Common myeloid progenitor, CD34-positive (primary cell): ENCODE measurements at regions of chr1 and their contacts with region 1.

Region 1: GRCh38 chr1:32400876-32401631 is 6.8 kb upstream of the BSDC1 start:
- DNase-seq: peak; percentile 39 to 54 (median 40)
- H3K4me3 ChIP-seq: peak overlapping the region in 3 of 7 experiments; percentile 13 to 52 (median 45)
- H3K27ac ChIP-seq: no peak overlapping the region
- H3K4me1 ChIP-seq: peaks cover 0 to 3% (median 1%) of the 10 kb centered on the region in 4 experiments
- H3K27me3 ChIP-seq: peaks cover 0 to 3% (median 0%) of the 10 kb centered on the region in 5 experiments

Region 2: DNA sequence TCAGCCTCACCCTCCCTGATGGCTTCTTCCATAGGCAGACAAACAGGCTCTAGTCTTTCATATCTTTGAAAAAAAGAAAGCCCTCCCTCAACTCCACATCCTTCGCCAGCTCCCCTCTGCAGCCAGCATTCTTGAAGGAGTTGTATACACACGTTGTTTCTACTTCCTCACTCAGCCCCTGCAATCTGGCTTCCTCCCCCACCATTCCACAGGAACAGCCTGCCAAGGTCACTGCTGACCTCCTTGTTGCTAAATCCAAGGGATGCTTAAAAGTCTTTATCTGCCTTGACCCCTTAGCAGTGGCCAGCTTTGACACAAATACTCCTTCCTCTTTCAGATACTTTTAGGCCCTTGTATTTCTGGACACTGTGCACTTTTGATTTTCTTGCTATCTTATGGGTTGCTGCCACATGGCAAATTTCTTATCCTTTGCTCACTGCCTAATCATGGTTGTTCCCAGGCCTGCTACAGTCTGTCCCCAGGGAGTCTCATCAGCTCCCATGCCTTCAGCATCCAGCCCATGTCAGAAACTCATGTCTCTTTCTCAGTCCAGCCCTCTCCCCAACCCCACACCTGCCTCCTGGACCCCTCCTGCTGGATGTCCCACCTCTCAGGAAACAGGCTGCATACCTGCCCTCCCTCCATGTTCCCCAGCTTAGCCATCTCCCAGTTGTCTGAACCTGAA is 47.0 kb before region 1 on chr1:
- CTCF ChIA-PET with region 1: no interaction called
- POLR2A ChIA-PET with region 1: no interaction called
- DNase-seq: no peak
- H3K4me3 ChIP-seq: no peak overlapping the region
- H3K27ac ChIP-seq: no peak overlapping the region
- H3K4me1 ChIP-seq: peaks cover 4 to 40% (median 29%) of the 10 kb centered on the region in 4 experiments
- H3K27me3 ChIP-seq: no peaks in the 10 kb centered on the region

Region 3: DNA sequence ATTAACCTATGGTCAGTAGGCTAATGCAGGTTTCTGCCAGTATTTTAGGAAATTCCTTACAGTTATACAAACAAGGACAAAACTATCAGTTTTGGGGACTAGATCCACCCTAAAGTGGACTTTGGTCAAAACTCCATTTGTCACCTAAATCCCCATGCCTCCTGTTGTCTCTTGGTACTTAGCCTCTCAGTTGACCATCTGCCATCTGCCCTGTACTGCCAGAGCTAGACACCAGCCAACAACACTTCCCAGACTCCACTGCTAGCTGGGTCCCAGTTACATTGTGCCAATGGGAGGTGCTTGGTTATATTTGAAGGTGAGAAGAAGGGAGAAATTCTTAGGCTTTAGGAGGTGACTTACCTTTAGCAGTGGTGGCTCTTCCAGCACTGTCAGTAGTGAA is 10.2 kb after region 1 on chr1:
- CTCF ChIA-PET with region 1: interaction called, 16 read pairs
- POLR2A ChIA-PET with region 1: no interaction called
- DNase-seq: no peak
- H3K4me3 ChIP-seq: no peak overlapping the region
- H3K27ac ChIP-seq: no peak overlapping the region
- H3K4me1 ChIP-seq: no peaks in the 10 kb centered on the region
- H3K27me3 ChIP-seq: peaks cover 0 to 6% (median 0%) of the 10 kb centered on the region in 5 experiments

Region 4: GRCh38 chr1:32426489-32427255 is 25.6 kb after region 1 on chr1:
- CTCF ChIA-PET with region 1: interaction called, 12 read pairs
- POLR2A ChIA-PET with region 1: no interaction called
- DNase-seq: peak; percentile 5 to 38 (median 19)
- H3K4me3 ChIP-seq: peak overlapping the region in 2 of 7 experiments; percentile 26 to 64
- H3K27ac ChIP-seq: no peak overlapping the region
- H3K4me1 ChIP-seq: peaks cover 0 to 7% (median 2%) of the 10 kb centered on the region in 4 experiments
- H3K27me3 ChIP-seq: peaks cover 0 to 46% (median 29%) of the 10 kb centered on the region in 5 experiments

Region 5: GRCh38 chr1:32480003-32480402 is 78.9 kb after region 1 on chr1:
- CTCF ChIA-PET with region 1: no interaction called
- POLR2A ChIA-PET with region 1: no interaction called
- DNase-seq: no peak
- H3K4me3 ChIP-seq: no peak overlapping the region
- H3K27ac ChIP-seq: no peak overlapping the region
- H3K4me1 ChIP-seq: no peaks in the 10 kb centered on the region
- H3K27me3 ChIP-seq: no peaks in the 10 kb centered on the region